CD4-positive, alpha-beta T cell (primary cell): ENCODE measurements at regions of chr9 and their contacts with region 1.

Region 1: GRCh38 chr9:19230356-19231125 is at the start of gene DENND4C:
- DNase-seq: peak; percentile 65 to 92 (median 80)
- ATAC-seq: peak; percentile 84
- H3K4me3 ChIP-seq: peak within 1 kb of the TSS; percentile 71
- H3K4me3 Mint-ChIP-seq: peak within 1 kb of the TSS; percentile 91
- H3K27ac ChIP-seq: peak within 1 kb of the TSS; percentile 58 to 65
- H3K27ac Mint-ChIP-seq: no peak within 1 kb of the TSS
- H3K4me1 ChIP-seq: peaks cover 16% of the 10 kb centered on the region
- H3K4me1 Mint-ChIP-seq: peaks cover 10% of the 10 kb centered on the region
- H3K27me3 ChIP-seq: no peaks in the 10 kb centered on the region
- H3K27me3 Mint-ChIP-seq: no peaks in the 10 kb centered on the region
- CTCF ChIP-seq: peak; percentile 13
- total RNA-seq, gene DENND4C: 32.5 to 34.1 TPM

Region 2: GRCh38 chr9:18163146-18163545 is 1067.4 kb before region 1 on chr9:
- CTCF ChIA-PET with region 1: no interaction called
- POLR2A ChIA-PET with region 1: no interaction called
- intact Hi-C with region 1: no loop called
- DNase-seq: no peak
- ATAC-seq: no peak
- H3K4me3 ChIP-seq: no peak overlapping the region
- H3K4me3 Mint-ChIP-seq: no peak overlapping the region
- H3K27ac ChIP-seq: no peak overlapping the region
- H3K27ac Mint-ChIP-seq: no peak overlapping the region
- H3K4me1 ChIP-seq: no peaks in the 10 kb centered on the region
- H3K4me1 Mint-ChIP-seq: no peaks in the 10 kb centered on the region
- H3K27me3 ChIP-seq: no peaks in the 10 kb centered on the region
- H3K27me3 Mint-ChIP-seq: peaks cover 3% of the 10 kb centered on the region
- CTCF ChIP-seq: no peak

Region 3: DNA sequence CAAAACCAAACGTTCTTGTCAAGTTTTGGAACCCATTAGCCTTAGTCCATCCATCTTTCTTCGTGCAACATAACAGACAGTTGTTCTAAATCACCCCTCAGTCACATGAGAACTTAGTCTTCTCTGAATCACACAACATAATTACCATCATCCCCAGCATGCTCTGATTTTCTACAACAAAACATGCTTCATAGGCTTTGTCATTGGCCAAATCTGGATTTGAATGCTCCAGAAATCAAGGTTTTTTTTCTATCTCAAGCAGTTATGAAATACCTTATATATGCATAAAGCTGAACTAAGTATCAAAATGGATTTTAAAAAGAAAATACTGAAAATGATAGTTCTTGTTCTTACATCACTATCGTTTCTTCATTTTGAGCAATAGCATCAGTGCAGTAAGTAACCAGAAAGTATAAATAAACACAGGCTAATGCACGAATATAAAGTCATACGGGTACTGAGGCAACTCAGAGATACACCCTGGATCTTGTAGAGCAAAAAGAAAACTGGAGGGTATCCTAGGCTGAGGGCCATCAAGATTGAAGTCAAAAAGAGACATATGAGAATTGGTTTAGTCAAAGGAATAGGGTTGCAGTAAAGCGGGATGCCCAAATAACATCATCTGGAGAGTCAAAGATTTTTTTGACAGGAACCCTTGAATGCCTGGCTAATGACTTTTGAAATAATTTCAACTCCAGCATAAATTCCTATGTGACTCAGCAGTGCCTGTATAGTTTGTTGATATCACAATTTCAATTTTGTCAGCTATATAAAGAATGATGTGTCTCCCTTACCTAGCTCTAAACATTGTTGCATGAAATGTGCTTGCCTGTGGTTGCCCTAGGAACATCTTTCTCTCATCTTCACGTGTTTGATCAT is 591.9 kb before region 1 on chr9:
- CTCF ChIA-PET with region 1: no interaction called
- POLR2A ChIA-PET with region 1: no interaction called
- intact Hi-C with region 1: no loop called
- DNase-seq: no peak
- ATAC-seq: no peak
- H3K4me3 ChIP-seq: no peak overlapping the region
- H3K4me3 Mint-ChIP-seq: no peak overlapping the region
- H3K27ac ChIP-seq: no peak overlapping the region
- H3K27ac Mint-ChIP-seq: no peak overlapping the region
- H3K4me1 ChIP-seq: no peaks in the 10 kb centered on the region
- H3K4me1 Mint-ChIP-seq: no peaks in the 10 kb centered on the region
- H3K27me3 ChIP-seq: no peaks in the 10 kb centered on the region
- H3K27me3 Mint-ChIP-seq: peaks cover 4% of the 10 kb centered on the region
- CTCF ChIP-seq: no peak

Region 4: DNA sequence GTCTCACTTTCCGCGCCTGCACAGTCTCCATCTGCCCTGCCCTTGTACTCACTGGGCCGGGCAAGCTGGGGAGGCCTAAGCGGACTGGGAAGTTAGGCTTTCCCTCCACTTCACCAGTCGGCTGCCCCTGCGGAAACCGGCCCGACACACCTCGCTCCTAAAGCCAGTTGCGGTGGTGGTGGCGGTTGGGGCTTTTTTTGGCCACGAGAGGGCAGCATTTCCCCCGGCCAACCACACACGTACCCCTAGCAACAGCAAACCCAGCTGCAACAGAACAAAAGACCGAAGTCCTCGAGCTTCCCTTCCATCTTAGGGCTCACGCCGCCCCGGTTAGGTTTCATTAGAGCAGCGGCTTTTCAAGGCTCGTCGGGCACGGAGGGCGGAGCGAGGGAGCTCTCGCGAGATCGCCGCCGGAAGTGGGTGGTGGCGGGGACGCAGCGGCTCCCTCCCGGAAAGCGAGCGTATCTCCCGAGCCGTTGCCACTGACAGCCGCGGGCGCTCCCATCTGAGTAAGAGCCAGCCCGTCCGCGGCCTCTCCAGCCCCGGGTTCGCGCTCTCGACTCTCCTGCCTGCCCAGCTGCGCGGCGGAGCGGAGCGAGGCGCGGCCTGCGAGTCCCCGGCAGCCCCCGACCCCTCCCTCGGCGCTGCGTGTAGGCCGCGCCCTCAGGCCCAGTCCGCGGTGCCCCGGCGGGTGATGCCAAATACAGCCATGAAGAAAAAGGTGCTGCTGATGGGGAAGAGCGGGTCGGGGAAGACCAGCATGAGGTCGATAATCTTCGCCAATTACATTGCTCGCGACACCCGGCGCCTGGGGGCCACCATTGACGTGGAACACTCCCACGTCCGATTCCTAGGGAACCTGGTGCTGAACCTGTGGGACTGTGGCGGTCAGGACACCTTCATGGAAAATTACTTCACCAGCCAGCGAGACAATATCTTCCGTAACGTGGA is 181.3 kb before region 1 on chr9 and contains the start of gene RRAGA:
- CTCF ChIA-PET with region 1: interaction called, 6 read pairs
- POLR2A ChIA-PET with region 1: interaction called, 27 read pairs
- intact Hi-C with region 1: loop called (anchors 1 to 5 kb)
- DNase-seq: peak; percentile 89 to 97 (median 93)
- ATAC-seq: peak; percentile 90
- H3K4me3 ChIP-seq: peak within 1 kb of the TSS; percentile 94
- H3K4me3 Mint-ChIP-seq: peak within 1 kb of the TSS; percentile 97
- H3K27ac ChIP-seq: peak within 1 kb of the TSS; percentile 86 to 93
- H3K27ac Mint-ChIP-seq: peak within 1 kb of the TSS; percentile 99
- H3K4me1 ChIP-seq: peaks cover 27% of the 10 kb centered on the region
- H3K4me1 Mint-ChIP-seq: peaks cover 50% of the 10 kb centered on the region
- H3K27me3 ChIP-seq: no peaks in the 10 kb centered on the region
- H3K27me3 Mint-ChIP-seq: no peaks in the 10 kb centered on the region
- CTCF ChIP-seq: peak; percentile 78
- total RNA-seq, gene RRAGA: 34.4 to 34.7 TPM

Region 5: DNA sequence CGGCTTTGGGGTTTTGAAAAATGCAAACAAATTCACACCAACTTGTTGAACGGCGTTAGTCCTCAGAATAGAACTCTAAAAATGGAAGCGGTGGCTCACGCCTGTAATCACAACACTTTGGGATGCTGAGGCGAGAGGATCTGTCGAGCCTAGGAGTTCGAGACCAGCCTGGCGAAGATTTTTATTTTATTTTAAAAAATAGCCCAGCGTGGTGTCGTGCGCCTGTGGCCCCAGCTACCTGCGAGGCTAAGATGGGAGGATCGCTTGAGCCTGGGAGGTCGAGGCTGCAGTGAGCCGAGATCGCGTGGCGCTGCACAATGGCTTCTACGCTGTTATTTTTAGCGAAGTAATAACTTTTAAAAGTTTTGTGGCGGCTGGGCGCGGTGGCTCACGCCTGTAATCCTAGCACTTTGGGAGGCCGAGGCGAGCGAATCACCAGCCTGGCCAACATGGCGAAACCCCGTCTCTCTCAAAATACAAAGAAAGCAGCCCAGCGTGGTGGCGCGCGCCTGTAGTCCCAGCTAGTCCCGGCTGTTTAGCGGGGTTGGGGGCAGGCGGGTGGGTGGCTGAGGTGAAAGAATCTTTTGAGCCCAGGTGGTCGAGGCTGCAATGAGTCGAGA is 102.5 kb before region 1 on chr9:
- CTCF ChIA-PET with region 1: no interaction called
- POLR2A ChIA-PET with region 1: interaction called, 10 read pairs
- intact Hi-C with region 1: loop called in 1 of 2 experiments (anchors 2 kb)
- DNase-seq: peak; percentile 2 to 60 (median 32)
- ATAC-seq: peak; percentile 25
- H3K4me3 ChIP-seq: peak overlapping the region; percentile 90
- H3K4me3 Mint-ChIP-seq: peak overlapping the region; percentile 94
- H3K27ac ChIP-seq: peak overlapping the region; percentile 90 to 92
- H3K27ac Mint-ChIP-seq: peak overlapping the region; percentile 95
- H3K4me1 ChIP-seq: peaks cover 59% of the 10 kb centered on the region
- H3K4me1 Mint-ChIP-seq: peaks cover 64% of the 10 kb centered on the region
- H3K27me3 ChIP-seq: no peaks in the 10 kb centered on the region
- H3K27me3 Mint-ChIP-seq: no peaks in the 10 kb centered on the region
- CTCF ChIP-seq: no peak

Region 6: GRCh38 chr9:19286634-19287200 is 56.2 kb after region 1 on chr9:
- CTCF ChIA-PET with region 1: no interaction called
- POLR2A ChIA-PET with region 1: no interaction called
- intact Hi-C with region 1: loop called in 1 of 2 experiments (anchors 10 kb)
- DNase-seq: no peak
- ATAC-seq: no peak
- H3K4me3 ChIP-seq: no peak overlapping the region
- H3K4me3 Mint-ChIP-seq: no peak overlapping the region
- H3K27ac ChIP-seq: no peak overlapping the region
- H3K27ac Mint-ChIP-seq: no peak overlapping the region
- H3K4me1 ChIP-seq: no peaks in the 10 kb centered on the region
- H3K4me1 Mint-ChIP-seq: peaks cover 33% of the 10 kb centered on the region
- H3K27me3 ChIP-seq: no peaks in the 10 kb centered on the region
- H3K27me3 Mint-ChIP-seq: no peaks in the 10 kb centered on the region
- CTCF ChIP-seq: no peak

Region 7: GRCh38 chr9:19456996-19457692 is 226.6 kb after region 1 on chr9:
- CTCF ChIA-PET with region 1: no interaction called
- POLR2A ChIA-PET with region 1: no interaction called
- intact Hi-C with region 1: loop called in 1 of 2 experiments (anchors 5 kb)
- DNase-seq: peak; percentile 26 to 83 (median 46)
- ATAC-seq: peak; percentile 98
- H3K4me3 ChIP-seq: peak overlapping the region; percentile 10
- H3K4me3 Mint-ChIP-seq: peak overlapping the region; percentile 0
- H3K27ac ChIP-seq: no peak overlapping the region
- H3K27ac Mint-ChIP-seq: no peak overlapping the region
- H3K4me1 ChIP-seq: peaks cover 8% of the 10 kb centered on the region
- H3K4me1 Mint-ChIP-seq: peaks cover 7% of the 10 kb centered on the region
- H3K27me3 ChIP-seq: no peaks in the 10 kb centered on the region
- H3K27me3 Mint-ChIP-seq: no peaks in the 10 kb centered on the region
- CTCF ChIP-seq: peak; percentile 97